ENCODE measurements at regions of chr1 and their contacts with region 1.

Region 1: GRCh38 chr1:165697881-165698760 is at the start of gene ALDH9A1:
- DNase-seq: peak; percentile 70 to 90 (median 80)
- ATAC-seq: peak; percentile 91
- H3K4me3 ChIP-seq: peak within 1 kb of the TSS; percentile 65
- H3K4me3 Mint-ChIP-seq: peak within 1 kb of the TSS; percentile 98
- H3K27ac ChIP-seq: peak within 1 kb of the TSS; percentile 81 to 90
- H3K27ac Mint-ChIP-seq: peak within 1 kb of the TSS; percentile 92
- H3K4me1 ChIP-seq: peaks cover 26% of the 10 kb centered on the region
- H3K4me1 Mint-ChIP-seq: peaks cover 45% of the 10 kb centered on the region
- H3K27me3 ChIP-seq: no peaks in the 10 kb centered on the region
- H3K27me3 Mint-ChIP-seq: no peaks in the 10 kb centered on the region
- CTCF ChIP-seq: no peak
- total RNA-seq, gene ALDH9A1: 33.9 to 35.5 TPM

Region 2: DNA sequence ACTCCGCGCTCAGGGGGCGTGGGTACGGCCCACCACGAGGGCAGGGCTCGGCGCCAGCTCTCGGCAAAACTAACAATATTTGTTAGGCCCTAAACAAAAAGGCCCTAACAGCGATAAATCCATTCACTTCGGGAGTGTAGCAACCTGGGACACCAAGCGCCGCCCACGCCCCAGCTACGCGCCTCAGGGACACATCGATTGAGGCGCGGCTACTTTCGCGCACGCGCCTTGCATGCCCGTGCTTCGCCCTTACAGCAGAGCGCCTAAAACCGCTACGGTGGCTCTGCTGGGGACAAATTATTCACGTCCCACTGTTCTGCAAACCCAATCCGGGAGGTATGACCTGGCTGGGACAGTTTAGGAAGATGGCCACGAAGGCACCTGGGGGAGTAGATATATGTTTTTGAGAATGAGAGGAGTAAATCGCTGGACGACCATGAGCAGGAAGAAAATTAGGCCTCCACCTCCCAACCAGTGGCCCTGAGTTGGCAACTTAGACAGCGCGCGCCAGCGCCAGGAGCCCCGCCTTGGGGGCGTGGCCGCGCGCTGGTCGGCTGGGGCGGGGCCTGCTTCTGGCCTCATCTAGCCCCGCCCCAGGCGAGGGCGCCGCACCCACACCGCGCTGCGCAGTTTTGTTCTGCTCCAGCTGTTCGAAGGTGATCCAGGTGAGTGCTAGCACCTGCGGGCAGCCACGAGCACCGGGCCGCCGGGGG is 67.3 kb before region 1 on chr1 and contains the start of gene MGST3:
- CTCF ChIA-PET with region 1: interaction called, 8 read pairs
- POLR2A ChIA-PET with region 1: interaction called, 21 read pairs
- intact Hi-C with region 1: loop called (anchors 1 kb)
- DNase-seq: peak; percentile 83 to 97 (median 90)
- ATAC-seq: peak; percentile 91
- H3K4me3 ChIP-seq: peak within 1 kb of the TSS; percentile 80
- H3K4me3 Mint-ChIP-seq: no peak within 1 kb of the TSS
- H3K27ac ChIP-seq: peak within 1 kb of the TSS; percentile 55 to 92
- H3K27ac Mint-ChIP-seq: no peak within 1 kb of the TSS
- H3K4me1 ChIP-seq: peaks cover 29% of the 10 kb centered on the region
- H3K4me1 Mint-ChIP-seq: peaks cover 14% of the 10 kb centered on the region
- H3K27me3 ChIP-seq: no peaks in the 10 kb centered on the region
- H3K27me3 Mint-ChIP-seq: no peaks in the 10 kb centered on the region
- CTCF ChIP-seq: no peak
- total RNA-seq, gene MGST3: 22.0 to 23.5 TPM

Region 3: DNA sequence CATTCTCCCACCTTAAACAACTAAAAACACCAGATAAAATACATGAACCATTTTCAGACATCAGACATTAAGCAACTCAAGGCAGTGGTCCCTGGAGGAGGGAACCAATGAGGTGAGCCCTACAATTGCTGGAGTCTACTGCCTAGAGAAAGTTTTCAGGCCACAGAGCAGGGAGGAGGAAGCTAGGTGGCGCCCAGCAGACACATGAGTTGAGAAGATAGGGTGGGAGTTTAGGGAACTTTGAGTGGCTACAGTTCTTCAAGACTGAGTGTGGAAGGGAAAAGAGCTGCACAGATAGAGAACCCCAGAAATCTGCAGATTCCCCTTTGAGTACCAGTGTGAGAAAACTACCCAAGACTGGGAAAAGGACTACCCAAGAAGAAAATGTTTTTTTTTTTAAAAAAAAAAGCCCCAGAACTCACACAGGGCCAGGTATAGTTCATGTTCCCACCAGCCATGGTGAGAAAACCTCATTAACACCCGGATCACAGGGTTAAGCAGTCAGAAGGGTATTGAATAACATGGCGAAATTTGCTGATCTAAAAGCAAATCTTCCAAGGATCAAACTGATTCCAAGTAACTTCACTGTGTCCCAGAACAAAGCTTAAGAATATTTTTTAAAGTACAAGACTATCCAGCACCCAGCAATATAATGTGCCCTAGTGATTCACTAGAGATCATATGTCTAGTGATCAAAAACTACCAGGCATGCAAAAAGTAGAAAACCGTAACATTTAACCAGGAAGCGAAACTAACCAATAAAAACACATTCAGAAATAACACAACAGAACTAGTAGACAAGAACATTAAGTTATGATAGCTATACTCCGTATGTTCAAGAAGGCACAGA is 11.8 kb before region 1 on chr1:
- CTCF ChIA-PET with region 1: interaction called, 4 read pairs
- POLR2A ChIA-PET with region 1: interaction called, 13 read pairs
- intact Hi-C with region 1: no loop called
- DNase-seq: peak in 2 of 14 experiments; percentile 18 to 33
- ATAC-seq: no peak
- H3K4me3 ChIP-seq: no peak overlapping the region
- H3K4me3 Mint-ChIP-seq: peak overlapping the region; percentile 30
- H3K27ac ChIP-seq: no peak overlapping the region
- H3K27ac Mint-ChIP-seq: peak overlapping the region; percentile 62
- H3K4me1 ChIP-seq: peaks cover 11% of the 10 kb centered on the region
- H3K4me1 Mint-ChIP-seq: peaks cover 54% of the 10 kb centered on the region
- H3K27me3 ChIP-seq: no peaks in the 10 kb centered on the region
- H3K27me3 Mint-ChIP-seq: no peaks in the 10 kb centered on the region
- CTCF ChIP-seq: no peak

Region 4: DNA sequence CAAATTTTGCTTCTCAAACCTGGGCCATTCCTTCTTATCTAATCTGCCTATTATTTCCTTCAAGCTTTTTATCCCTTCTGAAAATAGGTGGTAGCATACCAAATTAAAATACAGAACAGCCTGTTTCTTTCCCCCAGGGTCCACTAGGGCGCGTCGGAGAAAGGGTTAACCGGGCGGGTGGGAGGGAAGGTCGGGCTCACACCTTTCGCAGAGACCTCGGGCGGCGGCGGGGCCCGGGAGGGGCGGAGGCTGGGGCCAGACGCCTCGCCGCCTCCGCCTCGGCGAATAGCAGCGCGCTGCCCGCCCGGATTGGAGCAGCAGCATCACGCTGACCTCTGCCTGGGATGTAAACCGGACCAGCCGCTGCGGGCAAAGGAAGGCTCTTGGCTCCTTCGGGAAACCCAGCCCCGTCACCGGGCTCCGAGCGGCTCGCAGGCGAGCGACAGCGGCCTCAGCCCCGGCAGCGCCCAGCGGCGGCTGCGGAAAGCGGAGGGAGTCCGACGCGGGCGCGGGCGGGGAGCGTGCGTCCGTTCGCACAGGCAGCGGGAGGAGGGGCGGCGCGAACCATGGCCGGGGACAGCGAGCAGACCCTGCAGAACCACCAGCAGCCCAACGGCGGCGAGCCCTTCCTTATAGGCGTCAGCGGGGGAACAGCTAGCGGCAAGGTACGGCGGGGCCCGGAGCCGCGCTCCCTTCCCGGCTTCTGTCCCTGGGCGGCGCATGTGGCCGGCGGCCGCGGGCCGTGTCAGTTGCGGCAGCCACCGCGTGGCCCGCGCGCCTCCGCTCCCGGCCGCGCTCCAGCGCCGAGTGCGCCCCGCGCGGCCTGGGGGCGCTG is 129.4 kb after region 1 on chr1 and contains the start of gene UCK2:
- CTCF ChIA-PET with region 1: no interaction called
- POLR2A ChIA-PET with region 1: interaction called, 3 read pairs
- intact Hi-C with region 1: loop called in 1 of 2 experiments (anchors 5 kb)
- DNase-seq: peak; percentile 11 to 75 (median 24)
- ATAC-seq: peak; percentile 78
- H3K4me3 ChIP-seq: peak within 1 kb of the TSS; percentile 69
- H3K4me3 Mint-ChIP-seq: peak within 1 kb of the TSS; percentile 91
- H3K27ac ChIP-seq: no peak within 1 kb of the TSS
- H3K27ac Mint-ChIP-seq: peak within 1 kb of the TSS; percentile 31
- H3K4me1 ChIP-seq: peaks cover 16% of the 10 kb centered on the region
- H3K4me1 Mint-ChIP-seq: peaks cover 23% of the 10 kb centered on the region
- H3K27me3 ChIP-seq: no peaks in the 10 kb centered on the region
- H3K27me3 Mint-ChIP-seq: peaks cover 4% of the 10 kb centered on the region
- CTCF ChIP-seq: no peak
- total RNA-seq, gene UCK2: 0.67 to 0.71 TPM

Region 5: DNA sequence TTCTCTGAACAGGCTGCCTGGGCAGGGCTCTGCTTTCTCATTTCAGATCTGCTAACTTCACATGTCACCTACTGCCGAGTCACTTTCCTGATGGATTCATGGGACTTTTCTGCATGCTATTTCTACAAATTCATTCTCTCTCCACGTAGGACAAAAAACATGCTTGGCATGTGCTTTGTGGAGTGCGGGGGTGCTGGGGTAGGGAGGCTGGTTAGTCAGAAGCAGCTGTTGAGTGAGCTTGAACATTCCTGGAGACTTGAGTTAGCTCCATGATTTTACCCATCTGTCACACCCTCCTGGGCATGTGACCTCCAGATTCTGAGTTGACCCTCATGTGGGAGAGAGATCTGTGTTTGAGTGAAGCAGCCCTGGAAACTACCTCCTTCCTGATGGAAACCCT is 200.7 kb after region 1 on chr1:
- CTCF ChIA-PET with region 1: no interaction called
- POLR2A ChIA-PET with region 1: no interaction called
- intact Hi-C with region 1: no loop called
- DNase-seq: no peak
- ATAC-seq: no peak
- H3K4me3 ChIP-seq: no peak overlapping the region
- H3K4me3 Mint-ChIP-seq: no peak overlapping the region
- H3K27ac ChIP-seq: no peak overlapping the region
- H3K27ac Mint-ChIP-seq: no peak overlapping the region
- H3K4me1 ChIP-seq: peaks cover 3% of the 10 kb centered on the region
- H3K4me1 Mint-ChIP-seq: no peaks in the 10 kb centered on the region
- H3K27me3 ChIP-seq: no peaks in the 10 kb centered on the region
- H3K27me3 Mint-ChIP-seq: no peaks in the 10 kb centered on the region
- CTCF ChIP-seq: no peak

Measured in CD4-positive, alpha-beta T cell (primary cell).